Activated T-helper 2 cell treated with anti-CD3 and anti-CD28 coated beads, Interferon-gamma antibody, Interleukin-2, Interleukin-4, amounts not matched to agents 10 μg/mL and 5 μg/mL and 100 μg/mL, durations not matched to agents 14 hours and 24 hours and 36 hours (primary cell): ENCODE measurements at regions of chr3 and their contacts with region 1.

Region 1: DNA sequence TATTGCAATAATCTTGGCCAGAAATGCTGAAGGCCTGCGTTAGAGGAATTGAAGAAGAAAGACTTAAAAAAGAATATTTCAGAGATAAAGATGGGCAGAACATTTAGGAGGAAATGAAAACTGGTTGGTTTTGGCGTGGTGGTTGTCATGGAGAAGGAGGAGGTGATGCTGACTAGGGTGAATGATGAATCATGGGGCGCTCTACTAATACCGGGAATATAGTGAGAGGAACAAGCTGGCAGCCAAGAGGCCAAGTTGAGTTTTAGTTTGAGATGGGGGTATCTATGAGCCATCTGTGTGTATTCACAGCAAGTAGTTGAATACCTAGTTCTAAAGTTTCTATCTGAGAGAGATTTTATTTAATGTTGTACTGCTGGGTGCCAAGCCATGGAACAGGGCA is 6.8 kb upstream of the GAP43 start:
- DNase-seq: no peak
- H3K4me3 Mint-ChIP-seq: no peak overlapping the region
- H3K27ac Mint-ChIP-seq: no peak overlapping the region
- H3K4me1 Mint-ChIP-seq: peaks cover 11% of the 10 kb centered on the region
- H3K27me3 Mint-ChIP-seq: peaks cover 6% of the 10 kb centered on the region

Region 2: DNA sequence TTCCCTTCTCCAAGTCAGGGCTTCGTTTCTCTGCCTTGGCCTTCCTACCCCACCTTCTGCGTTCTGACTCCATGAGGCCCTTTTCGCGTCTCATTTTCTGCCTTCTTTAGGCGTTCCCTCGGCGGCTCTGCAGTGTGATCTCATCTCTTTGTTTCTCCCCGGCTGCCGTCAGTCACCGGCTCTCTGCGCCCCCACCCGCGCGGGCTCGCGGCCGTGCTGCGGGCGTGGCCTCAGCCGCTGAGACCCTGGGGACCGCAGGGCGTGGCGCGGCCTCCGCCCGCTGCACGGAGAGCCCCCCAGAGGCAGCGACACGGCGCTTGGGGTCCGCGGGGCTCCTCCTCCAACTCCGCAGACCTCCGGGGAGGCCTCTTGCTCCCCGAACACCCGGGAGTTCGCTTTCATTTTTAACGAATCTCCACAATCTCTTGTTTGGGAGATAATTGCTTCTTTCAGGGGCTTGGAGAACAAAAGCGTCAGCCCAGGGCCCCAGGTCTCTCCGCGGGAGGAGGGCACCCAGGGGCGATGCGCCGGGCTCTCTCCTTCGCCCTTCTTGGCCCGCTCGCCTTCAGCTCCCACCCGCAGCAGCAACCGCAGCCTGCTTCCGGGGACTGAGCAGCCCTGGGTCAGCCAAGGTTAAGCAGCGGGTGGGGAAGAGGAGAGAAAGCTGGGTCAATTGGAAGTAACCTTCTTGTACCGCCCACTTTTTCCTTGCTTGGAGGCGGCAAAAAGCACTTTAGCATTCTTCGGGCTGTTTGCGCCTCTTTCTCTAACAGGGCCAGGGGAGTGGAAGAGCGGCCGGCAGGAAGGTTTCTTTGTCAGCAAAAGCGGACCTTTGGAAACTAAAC is 42.1 kb after region 1 on chr3:
- intact Hi-C with region 1: loop called (anchors 2 kb)
- DNase-seq: peak; percentile 62
- H3K4me3 Mint-ChIP-seq: peak overlapping the region; percentile 93
- H3K27ac Mint-ChIP-seq: peak overlapping the region; percentile 99
- H3K4me1 Mint-ChIP-seq: peaks cover 33% of the 10 kb centered on the region
- H3K27me3 Mint-ChIP-seq: peaks cover 5% of the 10 kb centered on the region

Region 3: GRCh38 chr3:115666920-115667737 is 50.7 kb after region 1 on chr3:
- intact Hi-C with region 1: loop called (anchors 2 kb)
- DNase-seq: no peak
- H3K4me3 Mint-ChIP-seq: no peak overlapping the region
- H3K27ac Mint-ChIP-seq: peak overlapping the region; percentile 25
- H3K4me1 Mint-ChIP-seq: peaks cover 26% of the 10 kb centered on the region
- H3K27me3 Mint-ChIP-seq: peaks cover 12% of the 10 kb centered on the region

Region 4: DNA sequence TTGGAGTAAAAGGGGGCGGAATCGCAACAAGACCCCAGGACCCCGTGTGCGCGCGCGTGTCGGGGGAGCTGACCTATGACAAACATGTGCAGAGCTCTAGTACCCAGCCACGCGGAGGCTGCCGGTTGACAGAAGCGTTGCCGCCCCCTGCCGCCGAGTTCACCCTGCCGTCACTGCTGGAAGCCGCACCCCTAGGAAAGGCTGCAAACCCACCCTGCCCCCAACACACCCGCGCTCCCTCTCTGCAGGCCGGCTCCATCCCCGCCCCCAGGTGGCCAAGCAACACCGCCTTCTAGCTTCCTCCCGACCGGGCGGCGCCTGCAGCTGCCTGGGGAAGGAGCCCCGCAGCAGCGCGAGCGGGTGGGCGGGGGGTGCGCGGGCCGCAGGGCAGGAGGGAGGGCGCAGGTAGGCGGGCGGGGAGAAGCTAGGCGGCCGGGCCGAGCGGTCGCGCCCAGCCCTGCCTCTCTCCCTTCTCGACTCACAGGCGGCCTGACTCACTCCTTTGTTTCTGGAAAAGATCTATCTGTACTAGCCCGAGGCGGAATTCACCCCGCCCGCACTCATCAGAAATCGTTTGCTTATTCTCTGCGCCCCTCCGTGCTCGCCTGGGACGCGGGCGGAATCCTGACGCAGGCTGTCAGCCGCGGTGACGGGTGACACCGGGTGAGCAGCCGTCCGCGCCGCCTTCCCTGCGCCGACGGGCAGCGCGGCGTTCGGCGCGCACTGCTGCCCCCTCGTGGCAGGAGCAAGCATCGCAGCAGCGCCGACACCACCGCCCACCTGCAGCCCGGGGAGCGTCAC is 167.7 kb after region 1 on chr3:
- intact Hi-C with region 1: loop called (anchors 2 kb)
- DNase-seq: peak; percentile 85
- H3K4me3 Mint-ChIP-seq: peak overlapping the region; percentile 82
- H3K27ac Mint-ChIP-seq: peak overlapping the region; percentile 96
- H3K4me1 Mint-ChIP-seq: peaks cover 18% of the 10 kb centered on the region
- H3K27me3 Mint-ChIP-seq: peaks cover 15% of the 10 kb centered on the region